Common myeloid progenitor, CD34-positive (primary cell): ENCODE measurements at regions of chr12 and their contacts with region 1.

Region 1: GRCh38 chr12:108803428-108804105 is 53.8 kb downstream of the SSH1 start:
- DNase-seq: peak; percentile 77 to 84 (median 81)
- H3K4me3 ChIP-seq: no peak overlapping the region
- H3K27ac ChIP-seq: no peak overlapping the region
- H3K4me1 ChIP-seq: peaks cover 0 to 3% (median 1%) of the 10 kb centered on the region in 4 experiments
- H3K27me3 ChIP-seq: no peaks in the 10 kb centered on the region

Region 2: DNA sequence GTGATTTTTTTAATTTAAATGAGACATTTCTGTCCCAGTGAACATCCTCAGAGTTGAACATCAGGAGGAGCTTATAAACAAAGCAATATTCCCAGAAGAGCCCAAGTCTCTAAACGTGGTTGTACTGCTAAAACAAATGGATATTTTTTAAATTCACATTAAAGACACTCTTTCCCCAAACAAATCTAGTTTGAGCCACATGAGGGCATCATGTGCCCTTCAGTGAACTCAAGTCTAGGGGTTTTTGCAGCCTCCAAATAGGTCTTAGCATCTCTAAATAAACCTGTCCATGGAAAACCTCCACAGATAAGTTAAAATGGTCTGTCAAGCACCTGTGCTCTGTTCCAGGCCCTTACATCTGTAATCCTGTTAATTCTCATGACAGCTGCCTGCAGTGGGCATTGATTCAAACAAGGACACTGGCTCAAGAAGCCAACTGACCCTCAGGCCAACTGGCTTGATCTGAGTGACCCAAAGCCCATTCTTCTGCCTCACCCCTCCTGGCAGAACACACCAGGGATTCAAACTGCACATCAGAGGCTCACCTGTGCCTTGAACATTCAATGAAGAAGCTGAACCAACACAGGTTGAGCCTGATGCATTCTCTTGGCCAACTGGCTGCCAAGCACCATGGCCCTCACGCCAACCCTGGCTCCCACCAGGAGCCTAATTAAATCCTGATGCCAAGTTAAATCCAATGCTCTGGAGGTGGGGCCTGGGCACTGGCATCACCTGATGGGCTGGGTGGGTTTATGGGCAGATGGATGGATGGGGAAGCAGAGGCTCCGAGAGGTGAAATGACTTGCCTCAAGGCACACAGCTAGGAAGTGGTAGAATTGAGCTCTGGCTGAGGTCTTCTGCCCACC is 232.6 kb before region 1 on chr12:
- CTCF ChIA-PET with region 1: interaction called, 10 read pairs
- POLR2A ChIA-PET with region 1: no interaction called
- DNase-seq: peak; percentile 50 to 72 (median 72)
- H3K4me3 ChIP-seq: no peak overlapping the region
- H3K27ac ChIP-seq: no peak overlapping the region
- H3K4me1 ChIP-seq: peaks cover 9 to 28% (median 19%) of the 10 kb centered on the region in 4 experiments
- H3K27me3 ChIP-seq: no peaks in the 10 kb centered on the region

Region 3: GRCh38 chr12:108664338-108665258 is 139.0 kb before region 1 on chr12:
- CTCF ChIA-PET with region 1: interaction called, 185 read pairs
- POLR2A ChIA-PET with region 1: interaction called, 4 read pairs
- DNase-seq: peak; percentile 93 to 97 (median 96)
- H3K4me3 ChIP-seq: peak overlapping the region in 2 of 7 experiments; percentile 0 to 44
- H3K27ac ChIP-seq: peak overlapping the region; percentile 62 to 79
- H3K4me1 ChIP-seq: peaks cover 31 to 44% (median 38%) of the 10 kb centered on the region in 4 experiments
- H3K27me3 ChIP-seq: no peaks in the 10 kb centered on the region

Region 4: DNA sequence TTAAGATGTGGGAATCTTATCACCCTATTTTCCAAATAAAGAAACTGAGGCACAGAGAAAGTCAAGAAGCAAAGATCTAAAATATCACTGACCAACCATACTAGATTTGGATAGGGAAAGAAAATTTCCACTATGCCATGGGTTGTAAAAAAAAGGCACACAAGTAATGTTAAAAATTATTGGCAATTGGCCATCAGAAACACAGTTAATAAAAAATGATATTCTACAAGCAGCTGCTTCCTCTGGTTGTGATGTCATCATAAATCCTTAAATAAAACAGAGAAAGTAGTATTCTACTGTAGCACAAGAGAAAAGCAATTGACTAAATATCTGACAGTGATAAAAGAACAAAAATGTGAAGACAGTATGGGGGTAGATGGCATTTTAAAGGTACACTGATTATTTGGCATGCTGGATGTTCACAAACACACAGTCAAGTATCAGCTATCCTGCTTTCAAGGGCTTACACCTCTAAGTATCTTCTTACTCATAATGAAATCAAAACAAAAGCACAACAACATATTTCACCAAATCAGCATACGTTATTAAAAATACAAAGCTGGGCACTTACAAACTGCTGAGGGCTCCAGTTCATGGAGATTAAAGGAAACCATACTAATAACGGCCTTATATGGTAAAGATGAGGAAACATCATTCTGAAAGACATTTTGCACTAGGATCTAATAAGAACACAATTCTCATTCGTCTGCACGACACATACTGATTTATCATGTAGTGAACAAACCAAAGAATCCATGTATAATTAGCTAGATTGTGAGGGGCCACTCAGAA is 117.9 kb before region 1 on chr12:
- CTCF ChIA-PET with region 1: interaction called, 22 read pairs
- POLR2A ChIA-PET with region 1: no interaction called
- DNase-seq: peak in 2 of 3 donors; percentile 67 to 77
- H3K4me3 ChIP-seq: no peak overlapping the region
- H3K27ac ChIP-seq: peak overlapping the region in 1 of 2 experiments; percentile 55
- H3K4me1 ChIP-seq: peaks cover 27 to 70% (median 53%) of the 10 kb centered on the region in 4 experiments
- H3K27me3 ChIP-seq: no peaks in the 10 kb centered on the region

Region 5: DNA sequence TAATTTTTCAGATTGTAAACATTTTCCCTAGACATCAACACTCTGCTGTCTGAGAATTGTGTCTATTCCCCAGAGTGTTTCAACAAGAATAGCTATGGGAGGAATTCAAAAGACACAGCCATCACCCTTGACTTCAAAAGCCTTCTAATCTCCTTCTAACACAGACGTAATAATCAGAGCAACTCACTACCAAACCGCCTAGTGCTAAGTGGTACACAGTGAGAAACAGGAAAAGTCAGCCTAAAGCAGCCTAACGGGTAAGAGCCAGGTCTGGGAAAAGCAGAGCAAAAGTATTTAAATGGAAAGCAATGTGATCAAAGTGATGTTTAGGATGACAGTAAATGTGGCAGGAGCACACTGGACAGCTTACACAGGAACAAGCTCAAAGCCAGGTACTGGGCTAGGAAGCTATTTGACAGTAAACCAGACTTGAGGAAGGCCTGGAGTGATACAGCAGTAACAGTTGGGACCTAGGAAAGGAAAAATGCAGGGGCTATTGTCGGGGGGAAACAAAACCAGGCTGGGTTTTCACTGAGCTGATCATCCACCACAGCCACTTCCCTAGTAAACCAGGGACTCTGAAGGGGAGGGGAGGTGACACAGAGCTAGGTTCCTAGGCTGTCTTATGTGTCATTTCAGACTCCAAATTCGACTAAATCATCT is 101.7 kb before region 1 on chr12:
- CTCF ChIA-PET with region 1: interaction called, 15 read pairs
- POLR2A ChIA-PET with region 1: no interaction called
- DNase-seq: peak in 2 of 3 donors; percentile 59 to 72
- H3K4me3 ChIP-seq: peak overlapping the region in 2 of 7 experiments; percentile 2 to 54
- H3K27ac ChIP-seq: peak overlapping the region; percentile 43 to 46
- H3K4me1 ChIP-seq: peaks cover 49 to 80% (median 72%) of the 10 kb centered on the region in 4 experiments
- H3K27me3 ChIP-seq: no peaks in the 10 kb centered on the region

Region 6: GRCh38 chr12:108735855-108736254 is 67.7 kb before region 1 on chr12:
- CTCF ChIA-PET with region 1: no interaction called
- POLR2A ChIA-PET with region 1: no interaction called
- DNase-seq: no peak
- H3K4me3 ChIP-seq: no peak overlapping the region
- H3K27ac ChIP-seq: no peak overlapping the region
- H3K4me1 ChIP-seq: peaks cover 8 to 19% (median 15%) of the 10 kb centered on the region in 4 experiments
- H3K27me3 ChIP-seq: no peaks in the 10 kb centered on the region

Region 7: GRCh38 chr12:108826101-108826806 is 22.7 kb after region 1 on chr12:
- CTCF ChIA-PET with region 1: interaction called, 74 read pairs
- POLR2A ChIA-PET with region 1: interaction called, 4 read pairs
- DNase-seq: peak in 2 of 3 donors; percentile 47 to 56
- H3K4me3 ChIP-seq: peak overlapping the region in 4 of 7 experiments; percentile 37 to 65 (median 42)
- H3K27ac ChIP-seq: peak overlapping the region in 1 of 2 experiments; percentile 52
- H3K4me1 ChIP-seq: peaks cover 6 to 61% (median 40%) of the 10 kb centered on the region in 4 experiments
- H3K27me3 ChIP-seq: no peaks in the 10 kb centered on the region

Region 8: DNA sequence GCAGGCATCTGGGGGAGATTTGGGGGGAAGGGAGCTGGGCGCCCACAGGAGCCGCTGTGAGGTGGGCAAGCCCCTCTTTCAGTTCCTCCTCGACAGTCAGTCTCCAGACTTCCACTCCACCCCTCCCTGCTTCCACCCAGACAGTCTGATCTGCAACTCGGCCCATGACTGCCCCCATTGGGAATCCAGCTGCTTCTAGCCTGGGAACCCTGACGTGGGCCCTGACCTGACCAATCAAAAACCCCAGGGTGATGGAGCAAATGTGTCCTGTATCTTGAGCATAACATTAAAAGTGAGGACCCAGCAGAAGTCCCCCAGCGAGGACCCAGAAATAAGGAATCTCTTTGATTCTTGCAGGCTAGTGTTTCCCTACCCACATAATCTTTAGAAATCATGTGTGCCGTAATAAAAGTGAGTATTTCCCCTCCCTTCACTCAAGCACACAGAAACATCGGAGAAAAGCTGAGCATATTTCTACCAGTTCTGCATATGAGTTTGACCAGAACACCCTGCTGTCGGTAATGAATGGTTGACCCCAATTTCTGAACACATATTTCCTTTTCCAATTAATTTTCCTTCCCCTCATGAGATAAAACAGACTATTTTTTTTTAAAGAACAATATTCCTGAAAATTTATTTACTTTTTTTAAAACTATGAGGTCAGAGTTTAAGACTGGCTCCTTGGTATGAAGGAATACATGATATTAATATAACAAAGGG is 47.4 kb after region 1 on chr12:
- CTCF ChIA-PET with region 1: interaction called, 13 read pairs
- POLR2A ChIA-PET with region 1: no interaction called
- DNase-seq: peak; percentile 78 to 87 (median 83)
- H3K4me3 ChIP-seq: no peak overlapping the region
- H3K27ac ChIP-seq: peak overlapping the region in 1 of 2 experiments; percentile 12
- H3K4me1 ChIP-seq: peaks cover 4 to 49% (median 20%) of the 10 kb centered on the region in 4 experiments
- H3K27me3 ChIP-seq: no peaks in the 10 kb centered on the region

Region 9: DNA sequence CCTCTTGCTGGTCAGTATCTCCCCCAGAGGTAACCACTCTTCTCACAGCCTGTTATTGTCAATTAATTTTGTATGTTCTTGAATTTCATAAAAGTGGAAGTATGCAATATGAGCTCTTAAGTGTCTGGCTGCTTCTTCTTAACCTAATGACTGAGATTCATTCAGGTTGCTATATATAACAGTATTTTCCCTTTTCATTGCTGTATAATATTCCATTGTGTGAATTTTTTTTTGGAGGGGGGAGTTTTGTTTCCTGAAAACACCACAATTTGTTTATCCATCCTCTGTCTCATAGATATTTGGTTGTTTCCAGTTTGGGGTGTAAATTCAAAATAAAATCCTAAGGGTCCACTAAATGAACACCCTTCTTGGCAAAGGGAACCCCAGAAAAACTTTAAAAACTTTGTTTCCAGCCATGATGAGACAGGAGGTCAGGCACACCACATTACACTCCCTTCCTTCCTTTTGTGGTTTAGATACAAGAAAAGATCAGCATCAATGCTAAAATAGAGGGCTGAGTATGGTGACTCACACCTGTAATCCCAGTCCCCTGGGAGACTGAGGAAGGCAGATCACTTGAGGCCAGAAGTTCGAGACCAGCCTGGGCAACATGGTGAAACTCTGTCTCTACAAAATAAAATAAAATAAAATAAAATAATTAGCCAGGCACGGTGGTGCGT is 72.3 kb after region 1 on chr12:
- CTCF ChIA-PET with region 1: no interaction called
- POLR2A ChIA-PET with region 1: no interaction called
- DNase-seq: peak in 2 of 3 donors; percentile 64 to 72
- H3K4me3 ChIP-seq: no peak overlapping the region
- H3K27ac ChIP-seq: no peak overlapping the region
- H3K4me1 ChIP-seq: peaks cover 0 to 19% (median 0%) of the 10 kb centered on the region in 4 experiments
- H3K27me3 ChIP-seq: no peaks in the 10 kb centered on the region

Region 10: GRCh38 chr12:109016016-109016415 is 212.4 kb after region 1 on chr12:
- CTCF ChIA-PET with region 1: no interaction called
- POLR2A ChIA-PET with region 1: no interaction called
- DNase-seq: no peak
- H3K4me3 ChIP-seq: no peak overlapping the region
- H3K27ac ChIP-seq: no peak overlapping the region
- H3K4me1 ChIP-seq: peaks cover 0 to 5% (median 3%) of the 10 kb centered on the region in 4 experiments
- H3K27me3 ChIP-seq: peaks cover 0 to 13% (median 2%) of the 10 kb centered on the region in 5 experiments